ENCODE measurements at regions of chr5 and their contacts with region 1.

Region 1: GRCh38 chr5:99032234-99033013 is 103.6 kb upstream of the CHD1 start:
- DNase-seq: peak in 3 of 6 donors; percentile 54 to 72 (median 61)
- ATAC-seq: peak; percentile 85 to 95 (median 94)
- H3K4me3 ChIP-seq: peak overlapping the region in 1 of 4 donors; percentile 30
- H3K27ac ChIP-seq: peak overlapping the region in 2 of 4 donors; percentile 34 to 51
- H3K4me1 ChIP-seq: peaks cover 0 to 13% (median 8%) of the 10 kb centered on the region in 3 donors
- H3K27me3 ChIP-seq: no peaks in the 10 kb centered on the region
- CTCF ChIP-seq: peak in 3 of 4 donors; percentile 45 to 56 (median 56)

Region 2: DNA sequence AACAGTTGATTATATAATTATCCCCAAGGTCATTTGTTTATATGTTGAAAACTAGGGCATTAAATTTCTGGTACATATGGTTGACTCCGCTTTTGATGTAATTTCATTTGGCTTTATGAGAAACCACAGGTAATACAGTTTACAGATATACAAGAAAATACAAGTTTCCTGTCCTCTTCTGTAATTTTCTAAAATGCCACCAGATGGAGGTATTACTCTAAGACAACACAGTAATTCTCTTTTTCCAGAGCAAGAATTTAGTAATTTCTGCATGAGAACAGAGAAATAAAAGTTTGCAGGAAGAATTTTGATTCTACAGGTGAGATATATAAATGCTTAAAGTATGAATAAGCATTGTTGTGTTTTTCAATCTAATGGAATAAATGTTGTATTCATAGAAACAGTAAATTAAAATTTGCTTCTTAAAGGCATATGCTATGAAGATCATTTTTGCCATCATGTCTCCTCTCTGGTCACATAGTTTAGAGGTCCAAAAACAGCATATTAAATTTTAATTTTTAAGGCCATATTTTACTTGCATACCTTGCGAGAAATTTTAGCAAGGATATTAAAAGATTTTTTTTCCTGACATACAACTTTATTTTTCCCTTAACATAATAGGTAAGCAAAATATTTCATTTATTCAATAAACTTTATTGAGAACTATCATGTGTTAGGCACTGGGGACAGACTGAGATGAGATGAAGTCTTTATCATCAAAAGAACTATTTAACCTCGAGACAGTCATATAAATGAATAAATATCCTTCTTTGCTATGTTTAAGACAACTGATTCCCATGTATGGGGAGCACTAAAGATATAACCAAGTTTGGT is 126.3 kb before region 1 on chr5:
- intact Hi-C with region 1: loop called in 2 of 3 experiments (anchors 5 kb)
- DNase-seq: no peak
- ATAC-seq: peak; percentile 63 to 86 (median 79)
- H3K4me3 ChIP-seq: no peak overlapping the region
- H3K27ac ChIP-seq: no peak overlapping the region
- H3K4me1 ChIP-seq: peaks cover 0 to 9% (median 0%) of the 10 kb centered on the region in 3 donors
- H3K27me3 ChIP-seq: no peaks in the 10 kb centered on the region
- CTCF ChIP-seq: peak; percentile 39 to 63 (median 53)

Measured in pancreas (tissue), 10 donors.